ENCODE measurements at regions of chr7 and their contacts with region 1.

Region 1: DNA sequence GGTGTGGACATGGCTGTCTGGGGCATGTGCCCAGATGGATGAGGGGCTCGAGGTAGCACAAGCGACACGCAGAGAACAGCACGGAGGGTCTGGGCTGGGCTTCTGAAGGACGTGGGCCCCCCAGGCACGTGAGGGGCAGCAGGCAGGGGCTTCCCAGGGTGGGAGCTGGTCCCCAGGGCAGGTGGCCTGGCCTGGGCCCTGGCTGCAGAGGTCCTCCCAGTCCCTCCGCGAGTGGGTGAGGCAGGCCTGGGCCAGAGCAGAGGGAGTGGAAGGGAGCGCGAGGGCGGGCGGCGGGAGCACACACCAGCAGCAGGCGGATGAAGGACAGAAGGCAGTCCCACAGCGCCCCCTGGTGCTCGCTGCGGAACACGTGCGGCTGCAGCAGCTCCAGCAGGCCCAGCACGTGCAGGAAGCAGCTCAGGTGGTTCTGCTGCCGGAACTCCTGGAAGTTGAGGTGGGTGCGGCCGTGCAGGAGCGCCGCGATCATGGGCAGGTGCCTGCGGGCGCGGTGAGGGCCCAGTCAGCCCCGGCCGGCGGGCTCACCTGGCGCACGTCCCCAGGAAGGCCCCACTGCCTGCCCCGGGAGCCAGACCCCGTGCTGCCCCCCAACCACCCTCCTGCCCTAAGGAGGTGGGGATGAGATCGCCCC is 14.7 kb upstream of the MICALL2 start:
- DNase-seq: peak; percentile 93
- ATAC-seq: peak; percentile 69

Region 2: GRCh38 chr7:1193593-1194424 is 280.2 kb before region 1 on chr7:
- intact Hi-C with region 1: loop called (anchors 5 kb)
- DNase-seq: no peak
- ATAC-seq: peak; percentile 80

Region 3: GRCh38 chr7:1225441-1226185 is 248.4 kb before region 1 on chr7:
- intact Hi-C with region 1: loop called (anchors 10 kb)
- DNase-seq: no peak
- ATAC-seq: peak; percentile 60

Region 4: GRCh38 chr7:1432411-1433082 is 41.4 kb before region 1 on chr7:
- intact Hi-C with region 1: loop called (anchors 2 kb)
- DNase-seq: peak; percentile 86
- ATAC-seq: peak; percentile 52

Measured in Right ventricle myocardium inferior (tissue), 1 donor.